ENCODE measurements at regions of chr20 and their contacts with region 1.

Region 1: DNA sequence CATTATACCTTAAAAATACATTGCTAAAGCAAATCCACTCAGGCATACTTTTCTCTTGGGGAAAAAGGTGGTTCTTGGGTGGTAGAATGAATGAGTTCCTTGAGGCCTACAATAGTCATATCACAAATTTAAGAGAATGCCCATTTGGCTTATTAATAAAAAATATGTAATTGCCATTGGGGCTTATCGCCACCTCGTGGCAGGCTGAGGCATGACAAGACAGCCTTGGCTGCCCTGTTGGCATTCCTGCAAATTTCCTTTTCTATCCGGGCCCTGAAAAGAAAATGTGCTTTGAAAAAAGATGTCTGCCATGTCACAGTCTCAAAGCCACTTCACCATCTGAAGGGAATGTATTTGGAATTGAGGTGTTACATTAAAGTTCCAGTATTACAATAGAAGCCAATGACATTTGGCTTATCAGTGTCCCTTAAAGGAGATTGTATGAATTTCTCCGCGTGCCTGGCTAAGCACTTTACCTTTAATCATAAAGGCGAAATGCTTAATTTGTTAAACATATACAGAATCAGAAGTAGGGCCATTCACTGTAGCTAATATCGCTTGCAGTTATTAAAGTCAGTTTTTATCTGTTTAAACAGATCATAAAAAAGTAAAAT is 188.3 kb upstream of the ZFP64 start:
- DNase-seq: peak; percentile 54
- ATAC-seq: no peak
- H3K4me3 Mint-ChIP-seq: no peak overlapping the region
- H3K27ac Mint-ChIP-seq: no peak overlapping the region
- H3K4me1 Mint-ChIP-seq: peaks cover 23% of the 10 kb centered on the region
- H3K27me3 Mint-ChIP-seq: no peaks in the 10 kb centered on the region

Region 2: GRCh38 chr20:52060794-52061714 is 318.8 kb before region 1 on chr20:
- CTCF ChIA-PET with region 1: no interaction called
- POLR2A ChIA-PET with region 1: no interaction called
- intact Hi-C with region 1: no loop called
- DNase-seq: no peak
- ATAC-seq: no peak
- H3K4me3 Mint-ChIP-seq: no peak overlapping the region
- H3K27ac Mint-ChIP-seq: no peak overlapping the region
- H3K4me1 Mint-ChIP-seq: no peaks in the 10 kb centered on the region
- H3K27me3 Mint-ChIP-seq: no peaks in the 10 kb centered on the region

Region 3: GRCh38 chr20:52312132-52312729 is 67.6 kb before region 1 on chr20:
- CTCF ChIA-PET with region 1: interaction called, 12 read pairs
- POLR2A ChIA-PET with region 1: no interaction called
- intact Hi-C with region 1: loop called (anchors 1 kb)
- DNase-seq: peak; percentile 68
- ATAC-seq: peak; percentile 82
- H3K4me3 Mint-ChIP-seq: no peak overlapping the region
- H3K27ac Mint-ChIP-seq: no peak overlapping the region
- H3K4me1 Mint-ChIP-seq: peaks cover 20% of the 10 kb centered on the region
- H3K27me3 Mint-ChIP-seq: peaks cover 1% of the 10 kb centered on the region

Region 4: DNA sequence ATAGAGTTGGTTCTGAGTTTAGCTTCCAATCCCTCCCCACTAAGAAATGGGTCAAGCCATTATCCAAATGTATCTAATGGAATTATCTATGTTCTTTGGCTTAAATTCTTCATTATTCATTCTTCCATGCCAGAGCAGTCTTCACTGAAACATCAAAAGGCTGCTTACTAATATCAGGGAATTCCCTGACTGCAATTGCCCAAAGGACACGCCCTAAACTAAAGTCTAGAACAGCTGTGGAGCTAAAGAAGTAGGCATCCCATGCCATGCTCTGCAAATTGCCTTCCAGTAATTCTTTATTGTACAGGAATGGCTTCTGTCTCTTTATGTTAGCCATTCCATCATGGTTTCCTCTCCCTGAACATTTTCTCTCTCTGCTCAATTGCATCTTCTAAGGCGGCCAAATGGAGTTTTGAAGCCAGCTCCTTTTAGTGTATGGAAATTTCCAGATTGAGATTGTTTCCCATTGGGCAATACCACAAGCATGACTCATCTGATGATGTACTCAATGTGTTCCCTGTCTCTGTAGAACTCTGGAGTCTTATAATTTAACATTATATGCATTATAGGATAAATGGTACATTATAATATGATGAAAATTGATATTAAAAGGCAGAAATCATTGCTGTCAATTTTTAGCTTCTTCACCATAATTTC is 563.5 kb after region 1 on chr20:
- CTCF ChIA-PET with region 1: no interaction called
- POLR2A ChIA-PET with region 1: no interaction called
- intact Hi-C with region 1: no loop called
- DNase-seq: no peak
- ATAC-seq: no peak
- H3K4me3 Mint-ChIP-seq: no peak overlapping the region
- H3K27ac Mint-ChIP-seq: no peak overlapping the region
- H3K4me1 Mint-ChIP-seq: peaks cover 3% of the 10 kb centered on the region
- H3K27me3 Mint-ChIP-seq: no peaks in the 10 kb centered on the region

Measured in activated CD4-positive, alpha-beta T cell treated with anti-CD3 and anti-CD28 coated beads for 36 hours (primary cell).